Sigmoid colon (tissue), 7 donors: ENCODE measurements at regions of chr3 and their contacts with region 1.

Region 1: DNA sequence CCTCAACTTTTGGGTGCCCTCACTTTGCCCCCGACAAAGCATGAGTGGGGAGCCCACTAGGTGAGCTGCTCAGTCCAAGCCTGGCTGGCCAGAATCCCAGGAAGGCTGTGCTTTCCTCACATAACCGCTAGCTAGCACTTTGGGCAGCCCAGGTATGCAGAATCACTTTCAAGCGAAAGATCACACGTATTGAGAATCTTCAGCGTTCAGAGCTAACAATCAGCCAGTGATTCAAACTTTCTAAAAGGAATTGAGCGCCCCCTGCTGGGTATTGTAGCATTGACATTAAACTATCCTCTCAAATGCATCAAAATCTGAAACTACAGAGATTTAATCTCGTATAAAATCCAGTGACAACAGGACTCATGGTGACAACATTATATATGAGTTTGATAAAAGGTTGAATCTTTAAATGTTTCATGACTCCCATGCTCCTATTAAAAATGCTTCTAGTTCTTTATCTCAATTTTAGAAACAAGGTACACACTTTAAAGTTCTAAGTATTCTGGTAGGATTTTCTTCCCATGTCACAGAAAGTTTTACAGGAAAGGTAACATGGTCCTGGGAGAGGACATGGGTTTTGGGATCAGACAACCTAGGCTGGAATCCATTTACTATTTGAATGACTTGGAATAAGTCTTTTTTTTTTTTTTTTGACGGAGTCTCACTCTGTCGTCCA is 11.8 kb downstream of the ANAPC13 start:
- DNase-seq: peak; percentile 86
- H3K4me3 ChIP-seq: no peak overlapping the region
- H3K27ac ChIP-seq: no peak overlapping the region
- H3K4me1 ChIP-seq: peaks cover 0 to 18% (median 8%) of the 10 kb centered on the region in 4 donors
- H3K27me3 ChIP-seq: no peaks in the 10 kb centered on the region
- CTCF ChIP-seq: peak; percentile 64 to 77 (median 72)
- EP300 ChIP-seq: no peak
- POLR2A ChIP-seq: no peak

Region 2: GRCh38 chr3:134308350-134308891 is 165.6 kb before region 1 on chr3:
- intact Hi-C with region 1: loop called (anchors 1 kb)
- DNase-seq: peak; percentile 94
- H3K4me3 ChIP-seq: peak overlapping the region in 1 of 4 donors; percentile 9
- H3K27ac ChIP-seq: peak overlapping the region; percentile 76 to 95 (median 88)
- H3K4me1 ChIP-seq: peaks cover 0 to 48% (median 29%) of the 10 kb centered on the region in 4 donors
- H3K27me3 ChIP-seq: no peaks in the 10 kb centered on the region
- CTCF ChIP-seq: peak; percentile 98 to 100 (median 100)
- EP300 ChIP-seq: no peak
- POLR2A ChIP-seq: no peak

Region 3: DNA sequence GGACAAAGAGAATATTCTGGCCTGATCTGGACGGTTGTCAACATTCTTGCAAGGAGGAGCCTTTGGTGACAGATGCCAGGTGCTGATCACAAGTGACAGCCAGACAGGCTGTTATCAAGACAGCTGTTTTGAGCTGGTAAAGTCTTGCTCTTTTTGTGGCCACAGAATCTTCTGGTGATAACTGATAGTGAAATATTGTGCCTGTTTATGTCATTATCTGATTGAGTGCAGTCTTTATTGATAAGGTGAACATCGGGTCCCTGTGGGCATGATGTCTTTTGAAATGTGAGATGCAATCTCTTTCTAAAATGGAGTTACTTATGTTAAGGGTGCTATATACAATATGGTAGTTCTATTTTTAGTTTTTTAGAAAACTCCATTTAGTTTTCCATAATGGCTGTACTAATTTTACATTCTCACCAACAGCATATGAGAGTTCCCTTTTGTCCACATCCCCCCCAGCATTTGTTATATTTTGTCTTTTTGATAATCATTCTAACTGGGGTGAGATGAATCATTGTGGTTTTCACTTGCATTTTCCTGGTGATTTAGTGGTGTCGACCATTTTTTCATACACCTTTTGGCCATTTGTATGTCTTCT is 22.6 kb after region 1 on chr3:
- intact Hi-C with region 1: no loop called
- DNase-seq: no peak
- H3K4me3 ChIP-seq: no peak overlapping the region
- H3K27ac ChIP-seq: no peak overlapping the region
- H3K4me1 ChIP-seq: no peaks in the 10 kb centered on the region
- H3K27me3 ChIP-seq: no peaks in the 10 kb centered on the region
- CTCF ChIP-seq: no peak
- EP300 ChIP-seq: no peak
- POLR2A ChIP-seq: no peak

Region 4: DNA sequence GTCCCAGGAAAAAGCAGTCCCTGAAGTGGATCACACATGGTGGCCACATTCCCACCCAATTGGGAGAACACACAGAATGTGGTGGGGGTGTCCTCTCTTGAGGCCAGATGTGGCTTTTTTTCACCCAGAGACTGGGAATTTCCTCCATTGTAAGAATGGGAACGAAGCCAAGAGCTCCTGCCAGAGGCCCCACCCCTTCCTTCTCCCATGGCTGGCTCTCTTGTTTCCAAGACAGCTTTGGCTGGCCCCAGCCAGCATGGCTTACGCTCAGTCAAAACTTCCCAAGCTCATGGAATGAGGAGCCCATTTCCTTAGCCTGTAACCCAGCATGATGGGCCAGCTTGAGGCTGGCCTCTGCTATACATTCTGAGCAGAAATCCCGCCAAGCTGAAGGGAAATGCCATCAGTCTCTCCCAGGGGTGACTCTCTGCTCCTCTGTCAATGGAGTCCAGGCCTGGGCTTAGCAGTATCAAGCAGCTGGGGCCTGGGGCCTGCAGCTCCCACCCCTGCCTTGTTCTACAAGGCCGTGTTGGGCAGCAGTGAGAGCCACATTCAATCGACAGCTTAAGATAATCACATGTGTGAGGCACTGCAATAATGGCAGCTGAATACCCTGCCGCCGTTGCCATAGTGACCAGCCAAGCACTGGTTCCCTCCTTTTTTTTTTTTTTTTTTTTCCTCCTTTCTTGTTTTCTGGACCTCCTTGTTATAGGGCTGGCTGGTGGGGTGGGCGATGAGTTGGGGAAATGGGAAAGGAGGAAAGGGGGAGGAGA is 463.4 kb after region 1 on chr3:
- intact Hi-C with region 1: no loop called
- DNase-seq: peak; percentile 58
- H3K4me3 ChIP-seq: no peak overlapping the region
- H3K27ac ChIP-seq: no peak overlapping the region
- H3K4me1 ChIP-seq: peaks cover 0 to 23% (median 2%) of the 10 kb centered on the region in 4 donors
- H3K27me3 ChIP-seq: no peaks in the 10 kb centered on the region
- CTCF ChIP-seq: no peak
- EP300 ChIP-seq: no peak
- POLR2A ChIP-seq: no peak

Region 5: GRCh38 chr3:135260025-135260424 is 786.0 kb after region 1 on chr3:
- intact Hi-C with region 1: no loop called
- DNase-seq: no peak
- H3K4me3 ChIP-seq: no peak overlapping the region
- H3K27ac ChIP-seq: no peak overlapping the region
- H3K4me1 ChIP-seq: no peaks in the 10 kb centered on the region
- H3K27me3 ChIP-seq: no peaks in the 10 kb centered on the region
- CTCF ChIP-seq: no peak
- EP300 ChIP-seq: no peak
- POLR2A ChIP-seq: no peak